A673 (cell line): ENCODE measurements at regions of chr12 and their contacts with region 1.

Region 1: DNA sequence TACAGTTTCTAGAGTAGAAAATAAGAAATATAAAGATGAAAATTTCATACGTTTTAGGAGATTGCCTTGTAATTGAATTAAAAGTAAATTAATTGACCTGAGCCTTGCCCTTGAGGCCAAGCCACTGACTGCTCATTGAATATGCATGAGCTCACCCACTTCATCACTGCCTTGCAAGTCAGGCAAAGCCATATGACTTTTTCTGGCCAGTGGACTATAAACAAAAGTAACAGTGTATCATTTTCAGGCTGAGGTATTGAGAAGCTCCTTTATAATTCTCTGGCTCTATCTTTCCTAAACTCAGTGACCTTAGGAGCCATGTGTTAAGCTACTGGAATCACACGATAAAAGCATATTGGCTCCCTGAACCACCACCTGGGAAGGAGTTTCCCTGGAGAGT is 369.3 kb downstream of the NUAK1 start:
- DNase-seq: no peak
- H3K4me3 ChIP-seq: no peak overlapping the region
- H3K27ac ChIP-seq: no peak overlapping the region
- H3K4me1 ChIP-seq: no peaks in the 10 kb centered on the region
- H3K27me3 ChIP-seq: no peaks in the 10 kb centered on the region
- CTCF ChIP-seq: no peak

Region 2: GRCh38 chr12:105504286-105504685 is 265.2 kb before region 1 on chr12:
- CTCF ChIA-PET with region 1: no interaction called
- POLR2A ChIA-PET with region 1: no interaction called
- intact Hi-C with region 1: no loop called
- DNase-seq: no peak
- H3K4me3 ChIP-seq: no peak overlapping the region
- H3K27ac ChIP-seq: no peak overlapping the region
- H3K4me1 ChIP-seq: no peaks in the 10 kb centered on the region
- H3K27me3 ChIP-seq: peaks cover 42% of the 10 kb centered on the region
- CTCF ChIP-seq: peak; percentile 31; the same call in 1 of the 2 replicates

Region 3: GRCh38 chr12:105814283-105814682 is 44.8 kb after region 1 on chr12:
- CTCF ChIA-PET with region 1: no interaction called
- POLR2A ChIA-PET with region 1: no interaction called
- intact Hi-C with region 1: loop called (anchors 2 kb)
- DNase-seq: no peak
- H3K4me3 ChIP-seq: no peak overlapping the region
- H3K27ac ChIP-seq: no peak overlapping the region
- H3K4me1 ChIP-seq: no peaks in the 10 kb centered on the region
- H3K27me3 ChIP-seq: no peaks in the 10 kb centered on the region
- CTCF ChIP-seq: no peak